HEK293 (cell line): ENCODE measurements at regions of chr22 and their contacts with region 1.

Region 1: DNA sequence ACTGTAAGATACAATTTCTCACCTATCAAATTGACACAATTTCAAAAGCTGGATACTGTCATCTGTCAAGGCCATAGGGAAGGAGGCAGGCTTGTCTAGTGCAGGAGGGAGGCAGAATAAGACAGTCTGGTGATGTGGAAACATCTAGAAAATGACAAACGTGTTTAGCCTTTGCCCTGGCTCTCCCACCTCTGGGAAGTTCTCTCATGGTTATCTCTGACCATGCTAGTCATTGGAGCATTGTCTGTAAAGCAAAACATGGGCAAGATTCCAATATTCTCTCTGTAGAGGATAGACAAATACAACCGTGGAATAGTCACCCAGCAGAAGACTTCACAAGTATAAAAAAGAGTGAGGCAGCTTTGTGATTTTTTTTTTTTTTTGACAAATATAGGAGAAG is 9.1 kb upstream of the SERHL2 start:
- H3K4me3 ChIP-seq: no peak overlapping the region
- H3K27ac ChIP-seq: no peak overlapping the region
- H3K4me1 ChIP-seq: no peaks in the 10 kb centered on the region
- CTCF ChIP-seq: no peak

Region 2: GRCh38 chr22:42511401-42511891 is 33.2 kb before region 1 on chr22:
- CTCF ChIA-PET with region 1: no interaction called
- POLR2A ChIA-PET with region 1: no interaction called
- H3K4me3 ChIP-seq: no peak overlapping the region
- H3K27ac ChIP-seq: no peak overlapping the region
- H3K4me1 ChIP-seq: no peaks in the 10 kb centered on the region
- CTCF ChIP-seq: no peak

Region 3: DNA sequence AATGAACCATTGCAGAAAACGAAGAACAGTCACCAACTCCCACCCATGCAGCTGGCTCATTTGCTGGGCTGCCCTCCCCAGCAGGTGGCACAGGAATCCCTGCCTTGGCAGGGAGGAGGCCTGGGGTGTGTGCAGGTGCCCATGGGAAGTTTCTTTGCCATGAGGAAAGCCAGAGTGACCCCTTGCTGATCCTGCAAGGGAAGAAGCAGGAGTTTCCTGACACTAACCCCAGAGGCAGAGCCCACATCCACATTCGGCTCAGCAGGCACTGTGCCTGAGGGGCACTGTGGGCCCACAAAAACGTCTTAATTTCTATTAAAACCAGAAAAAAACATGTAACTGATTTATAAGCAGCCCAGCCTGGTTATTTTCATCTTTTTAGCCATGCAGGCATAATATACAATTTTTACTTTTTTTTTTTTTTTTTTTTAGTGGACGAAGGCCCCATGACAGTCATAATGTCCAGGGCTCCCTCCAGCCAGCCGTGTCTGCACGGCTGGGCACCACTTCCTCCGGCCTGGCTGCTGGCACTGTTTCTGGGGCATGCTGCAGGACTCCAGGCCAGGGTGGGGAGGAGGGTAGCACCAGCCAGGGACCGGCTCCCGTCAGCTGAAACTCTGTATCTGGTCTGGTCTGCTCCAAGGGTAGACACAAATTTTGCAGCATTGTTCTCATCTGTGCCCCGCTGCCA is 16.3 kb before region 1 on chr22:
- CTCF ChIA-PET with region 1: interaction called, 12 read pairs
- POLR2A ChIA-PET with region 1: no interaction called
- H3K4me3 ChIP-seq: no peak overlapping the region
- H3K27ac ChIP-seq: no peak overlapping the region
- H3K4me1 ChIP-seq: no peaks in the 10 kb centered on the region
- CTCF ChIP-seq: no peak